ENCODE measurements at regions of chr4 and their contacts with region 1.

Region 1: GRCh38 chr4:20773144-20773997 is 73.1 kb downstream of the PACRGL start:
- DNase-seq: peak; percentile 41
- CTCF ChIP-seq: peak; percentile 64

Region 2: GRCh38 chr4:20760053-20760452 is 13.3 kb before region 1 on chr4:
- CTCF ChIA-PET with region 1: interaction called, 16 read pairs
- POLR2A ChIA-PET with region 1: no interaction called
- DNase-seq: no peak
- CTCF ChIP-seq: no peak

Region 3: DNA sequence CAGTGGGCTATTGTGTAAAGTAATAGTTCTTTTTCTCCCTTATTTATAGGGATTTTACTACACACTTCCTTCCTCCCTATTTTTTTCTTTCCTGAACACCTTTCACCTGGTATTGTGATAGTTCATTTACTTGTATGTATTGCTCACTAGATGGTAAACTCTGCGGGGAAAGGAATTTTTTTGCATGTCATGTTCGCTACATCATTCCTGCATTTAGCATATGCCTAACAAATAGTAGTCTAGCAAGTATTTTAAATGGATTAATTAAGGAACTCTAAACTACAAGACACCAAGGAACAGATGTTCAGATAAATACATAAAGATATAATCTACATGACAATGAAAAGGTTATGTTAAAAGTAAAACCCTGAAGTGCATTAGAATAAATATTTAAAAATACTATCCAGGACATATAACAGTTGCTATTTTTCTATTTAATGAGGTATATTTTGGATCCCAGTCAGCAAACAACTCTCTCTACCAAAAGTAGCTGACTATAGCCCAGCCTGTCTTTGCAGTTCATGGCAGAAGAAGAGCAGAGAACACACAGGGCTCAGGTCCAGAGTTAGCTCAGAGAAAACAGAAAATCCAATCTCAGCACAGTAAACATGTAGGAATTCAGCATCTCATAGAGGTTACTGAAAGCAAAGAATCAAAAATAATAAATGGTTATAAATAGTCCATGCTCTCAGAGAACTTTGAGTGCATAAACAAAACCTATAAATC is 14.7 kb after region 1 on chr4:
- CTCF ChIA-PET with region 1: interaction called, 12 read pairs
- POLR2A ChIA-PET with region 1: no interaction called
- DNase-seq: no peak
- CTCF ChIP-seq: no peak

Region 4: GRCh38 chr4:20805716-20806115 is 32.3 kb after region 1 on chr4:
- CTCF ChIA-PET with region 1: interaction called, 41 read pairs
- POLR2A ChIA-PET with region 1: no interaction called
- DNase-seq: no peak
- CTCF ChIP-seq: no peak

Region 5: DNA sequence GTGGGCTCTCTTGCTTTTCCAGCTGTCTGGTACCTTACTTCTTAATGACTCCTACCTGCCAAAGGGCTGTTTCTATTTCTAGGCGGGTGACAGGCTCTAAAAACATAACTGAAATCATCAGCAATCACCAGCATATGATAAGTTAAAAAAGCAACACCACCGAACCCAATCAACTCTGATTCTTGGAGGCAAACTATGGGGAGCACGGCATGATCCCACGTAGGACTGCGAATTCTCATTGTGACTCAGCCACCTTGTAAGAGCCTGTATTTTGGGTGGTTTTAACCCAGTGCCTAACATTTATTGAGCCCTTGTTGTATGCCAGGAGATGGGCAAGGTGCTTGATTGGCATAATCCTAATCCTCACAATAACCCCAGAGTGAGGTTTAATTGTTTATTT is 83.7 kb after region 1 on chr4:
- CTCF ChIA-PET with region 1: no interaction called
- POLR2A ChIA-PET with region 1: no interaction called
- DNase-seq: no peak
- CTCF ChIP-seq: no peak

Region 6: GRCh38 chr4:21469438-21470300 is 696.3 kb after region 1 on chr4:
- CTCF ChIA-PET with region 1: interaction called, 27 read pairs
- POLR2A ChIA-PET with region 1: no interaction called
- DNase-seq: peak; percentile 7
- CTCF ChIP-seq: peak; percentile 39

Region 7: GRCh38 chr4:21765810-21766407 is 992.5 kb after region 1 on chr4:
- CTCF ChIA-PET with region 1: interaction called, 57 read pairs
- POLR2A ChIA-PET with region 1: no interaction called
- DNase-seq: peak; percentile 18
- CTCF ChIP-seq: peak; percentile 91